Activated T-helper 2 cell treated with anti-CD3 and anti-CD28 coated beads, Interferon-gamma antibody, Interleukin-2, Interleukin-4, amounts not matched to agents 10 μg/mL and 5 μg/mL and 100 μg/mL, durations not matched to agents 14 hours and 24 hours and 36 hours (primary cell): ENCODE measurements at regions of chr6 and their contacts with region 1.

Region 1: GRCh38 chr6:37985302-37985701 is 165.8 kb downstream of the ZFAND3 start:
- DNase-seq: no peak
- H3K4me3 Mint-ChIP-seq: no peak overlapping the region
- H3K27ac Mint-ChIP-seq: no peak overlapping the region
- H3K4me1 Mint-ChIP-seq: peaks cover 52% of the 10 kb centered on the region
- H3K27me3 Mint-ChIP-seq: no peaks in the 10 kb centered on the region

Region 2: DNA sequence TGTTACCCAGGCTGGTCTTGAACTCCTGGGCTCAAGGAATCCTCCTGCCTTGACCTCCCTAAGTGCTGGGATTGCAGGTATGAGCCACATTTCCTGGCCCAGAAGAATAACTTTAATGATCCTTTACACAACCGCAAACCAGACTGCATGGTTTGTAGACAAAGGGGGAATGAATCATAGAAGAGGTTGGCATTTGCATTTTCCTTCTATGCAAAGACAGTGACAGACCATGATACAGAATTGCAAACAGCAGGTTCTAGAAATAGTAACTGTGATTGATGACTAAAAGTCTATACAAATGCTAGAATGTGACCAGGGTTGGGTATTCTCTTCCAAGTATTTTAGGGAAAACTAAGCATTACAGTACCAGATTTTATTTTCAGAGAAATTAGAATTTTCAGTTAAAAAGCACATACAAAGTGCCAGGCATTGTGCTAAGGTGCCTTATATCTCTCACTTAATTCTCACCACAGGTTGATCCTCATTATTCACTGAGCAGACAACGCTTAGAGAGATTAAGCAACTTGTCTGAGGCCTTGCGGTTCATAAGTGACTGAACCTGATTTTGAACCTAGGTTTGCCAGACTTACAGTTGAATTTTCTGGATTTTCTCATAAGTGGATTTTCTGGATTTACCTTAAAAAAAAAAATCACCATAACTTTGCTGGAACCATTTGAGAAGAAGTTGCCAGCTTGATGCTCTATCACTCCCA is 19.2 kb before region 1 on chr6:
- intact Hi-C with region 1: loop called (anchors 2 kb)
- DNase-seq: no peak
- H3K4me3 Mint-ChIP-seq: no peak overlapping the region
- H3K27ac Mint-ChIP-seq: no peak overlapping the region
- H3K4me1 Mint-ChIP-seq: peaks cover 35% of the 10 kb centered on the region
- H3K27me3 Mint-ChIP-seq: no peaks in the 10 kb centered on the region

Region 3: DNA sequence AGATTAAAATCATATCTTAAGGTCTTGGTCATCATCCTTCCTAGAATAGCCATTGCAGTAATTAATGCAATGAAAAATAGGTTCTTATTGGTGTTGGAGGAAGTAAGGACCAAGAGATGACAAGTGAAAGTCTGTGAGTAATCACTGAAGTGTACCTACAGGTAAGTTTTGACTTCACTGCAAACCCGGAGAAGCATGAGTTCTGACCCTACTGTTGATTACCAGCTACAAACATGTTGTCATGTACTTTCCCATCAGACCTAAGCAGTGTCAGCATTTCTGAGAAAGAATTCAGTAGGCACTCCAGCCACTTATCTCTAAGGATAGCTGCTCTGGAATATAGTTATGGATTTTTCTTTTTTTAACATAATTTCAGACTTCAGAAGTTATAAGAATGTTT is 115.1 kb after region 1 on chr6:
- intact Hi-C with region 1: no loop called
- DNase-seq: no peak
- H3K4me3 Mint-ChIP-seq: no peak overlapping the region
- H3K27ac Mint-ChIP-seq: no peak overlapping the region
- H3K4me1 Mint-ChIP-seq: peaks cover 6% of the 10 kb centered on the region
- H3K27me3 Mint-ChIP-seq: no peaks in the 10 kb centered on the region

Region 4: DNA sequence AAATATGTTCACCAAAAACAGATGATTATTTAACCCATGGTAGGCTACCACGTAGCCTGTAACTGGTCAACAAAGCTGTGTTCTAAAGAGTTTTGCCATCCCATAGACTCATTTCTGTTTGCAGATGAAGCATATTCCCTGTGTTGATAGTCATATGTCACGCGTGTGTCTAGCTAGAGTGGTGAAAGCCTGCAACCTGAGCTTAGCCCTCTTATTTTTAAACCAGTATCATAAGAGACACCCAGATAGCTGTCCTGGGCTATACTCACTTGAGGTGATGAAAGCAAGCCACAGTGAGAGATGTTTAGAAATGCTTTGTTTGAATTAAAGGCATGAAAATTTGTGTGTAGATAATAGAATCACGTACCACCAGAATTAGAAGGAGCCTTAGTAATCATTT is 142.0 kb after region 1 on chr6:
- intact Hi-C with region 1: no loop called
- DNase-seq: no peak
- H3K4me3 Mint-ChIP-seq: no peak overlapping the region
- H3K27ac Mint-ChIP-seq: no peak overlapping the region
- H3K4me1 Mint-ChIP-seq: peaks cover 17% of the 10 kb centered on the region
- H3K27me3 Mint-ChIP-seq: no peaks in the 10 kb centered on the region